ENCODE measurements at regions of chr3 and their contacts with region 1.

Region 1: GRCh38 chr3:150925751-150926201 is 20.5 kb upstream of the MINDY4B start:
- DNase-seq: peak in 1 of 2 experiments; percentile 77
- H3K4me3 ChIP-seq: no peak overlapping the region
- H3K27ac ChIP-seq: no peak overlapping the region
- H3K4me1 ChIP-seq: no peaks in the 10 kb centered on the region
- H3K27me3 ChIP-seq: peaks cover 4% of the 10 kb centered on the region; the same call in 1 of the 2 replicates
- CTCF ChIP-seq: peak; percentile 92

Region 2: DNA sequence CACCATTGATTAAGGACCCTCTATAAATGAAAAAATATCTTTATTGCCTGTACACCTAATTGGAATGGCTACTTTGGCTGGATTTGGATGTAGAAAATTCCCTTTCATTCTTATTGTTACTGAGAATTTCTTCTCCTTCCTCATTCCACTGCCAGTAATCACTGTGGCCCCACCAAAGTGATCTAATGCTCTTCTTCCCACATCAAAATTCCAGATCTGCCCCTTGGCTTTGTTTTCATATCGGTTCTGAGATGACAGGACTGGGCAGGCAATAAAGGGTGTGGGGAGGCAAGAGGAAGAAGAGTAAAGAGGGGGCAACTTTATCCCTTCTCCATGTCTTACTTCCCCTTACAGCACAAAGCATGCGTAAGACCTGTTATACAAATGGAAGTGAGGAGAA is 1135.5 kb before region 1 on chr3:
- CTCF ChIA-PET with region 1: no interaction called
- POLR2A ChIA-PET with region 1: no interaction called
- intact Hi-C with region 1: no loop called
- DNase-seq: peak; percentile 41 to 63
- H3K4me3 ChIP-seq: no peak overlapping the region
- H3K27ac ChIP-seq: 0 out of 2 replicates have a peak overlapping the region, but pooled peaks have one; percentile 25
- H3K4me1 ChIP-seq: peaks cover 15% of the 10 kb centered on the region
- H3K27me3 ChIP-seq: no peaks in the 10 kb centered on the region
- CTCF ChIP-seq: no peak

Region 3: DNA sequence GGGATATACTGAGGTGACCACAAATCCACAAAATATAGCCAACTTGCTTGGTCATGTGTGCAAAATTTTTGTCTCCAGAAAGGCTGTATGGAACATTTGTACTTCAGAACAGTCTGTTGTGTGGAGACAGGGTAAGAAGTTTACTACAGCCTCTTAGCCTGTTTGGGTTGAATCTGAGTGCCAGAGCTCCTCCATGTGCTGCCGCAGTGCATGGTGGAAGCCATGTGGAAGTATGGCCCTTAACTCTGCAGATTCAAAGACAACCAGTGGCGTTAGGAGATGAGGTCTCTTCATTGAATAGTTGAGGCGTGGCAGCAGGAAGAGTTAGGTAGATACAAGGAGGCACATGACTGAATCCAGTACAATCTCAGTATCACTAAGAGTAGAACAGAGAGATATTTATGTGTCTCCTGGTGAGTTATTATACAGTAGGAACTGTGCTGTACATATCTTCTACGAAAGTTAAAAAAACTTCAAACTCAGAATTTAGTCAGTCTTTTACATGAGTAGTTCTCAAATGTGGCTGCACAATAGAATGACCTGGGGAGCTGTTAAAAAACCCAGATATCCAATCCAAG is 369.8 kb before region 1 on chr3:
- CTCF ChIA-PET with region 1: no interaction called
- POLR2A ChIA-PET with region 1: interaction called, 33 read pairs
- intact Hi-C with region 1: no loop called
- DNase-seq: no peak
- H3K4me3 ChIP-seq: no peak overlapping the region
- H3K27ac ChIP-seq: no peak overlapping the region
- H3K4me1 ChIP-seq: no peaks in the 10 kb centered on the region
- H3K27me3 ChIP-seq: no peaks in the 10 kb centered on the region
- CTCF ChIP-seq: no peak

Region 4: DNA sequence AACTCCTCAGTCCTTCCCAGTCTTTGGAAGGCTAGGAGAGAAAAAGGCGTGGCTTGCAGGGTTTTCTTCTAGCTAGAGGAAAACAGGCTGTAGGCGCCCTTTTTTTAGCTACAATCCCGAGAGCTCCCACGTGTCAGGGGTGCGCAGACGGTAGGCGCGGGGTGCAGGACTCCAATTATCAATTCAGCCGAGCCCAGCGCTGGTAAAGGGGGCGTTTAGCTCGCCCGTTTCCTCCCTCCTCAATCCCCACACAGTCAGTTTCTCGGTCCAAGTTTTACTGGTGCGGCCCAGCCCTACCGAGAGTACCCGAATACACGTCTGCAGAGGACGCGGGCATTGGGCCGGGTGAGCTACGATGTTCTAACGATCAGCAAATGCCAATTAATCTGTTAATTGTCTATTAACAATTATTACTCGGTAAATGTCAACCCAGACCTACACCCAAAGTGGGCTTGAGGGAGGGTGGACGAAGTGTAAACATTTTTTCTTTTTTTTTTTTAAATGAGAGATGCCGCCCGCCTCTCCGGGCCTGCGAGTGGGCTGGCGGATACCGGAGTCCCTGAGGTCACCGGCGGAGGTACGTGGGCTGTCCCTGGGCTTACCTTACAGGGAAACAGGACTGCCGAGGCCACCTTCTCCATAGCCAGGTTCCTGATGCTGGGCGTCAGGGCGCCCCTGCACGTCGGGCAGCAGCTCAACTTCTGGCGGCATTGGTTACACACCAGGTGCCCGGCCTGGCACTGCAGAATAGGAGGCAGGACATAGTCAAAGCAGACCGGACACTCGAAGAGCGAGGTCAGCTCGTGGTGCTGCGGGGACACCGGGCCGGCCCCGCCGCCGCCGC is 163.7 kb before region 1 on chr3:
- CTCF ChIA-PET with region 1: no interaction called
- POLR2A ChIA-PET with region 1: no interaction called
- intact Hi-C with region 1: no loop called
- DNase-seq: peak; percentile 49 to 55
- H3K4me3 ChIP-seq: peak overlapping the region; percentile 69
- H3K27ac ChIP-seq: peak overlapping the region; percentile 84; the same call in 1 of the 2 replicates
- H3K4me1 ChIP-seq: peaks cover 55% of the 10 kb centered on the region
- H3K27me3 ChIP-seq: no peaks in the 10 kb centered on the region
- CTCF ChIP-seq: no peak

Region 5: GRCh38 chr3:150936693-150937092 is 10.9 kb after region 1 on chr3:
- CTCF ChIA-PET with region 1: no interaction called
- POLR2A ChIA-PET with region 1: no interaction called
- intact Hi-C with region 1: no loop called
- DNase-seq: no peak
- H3K4me3 ChIP-seq: no peak overlapping the region
- H3K27ac ChIP-seq: no peak overlapping the region
- H3K4me1 ChIP-seq: peaks cover 7% of the 10 kb centered on the region
- H3K27me3 ChIP-seq: no peaks in the 10 kb centered on the region
- CTCF ChIP-seq: no peak

Region 6: DNA sequence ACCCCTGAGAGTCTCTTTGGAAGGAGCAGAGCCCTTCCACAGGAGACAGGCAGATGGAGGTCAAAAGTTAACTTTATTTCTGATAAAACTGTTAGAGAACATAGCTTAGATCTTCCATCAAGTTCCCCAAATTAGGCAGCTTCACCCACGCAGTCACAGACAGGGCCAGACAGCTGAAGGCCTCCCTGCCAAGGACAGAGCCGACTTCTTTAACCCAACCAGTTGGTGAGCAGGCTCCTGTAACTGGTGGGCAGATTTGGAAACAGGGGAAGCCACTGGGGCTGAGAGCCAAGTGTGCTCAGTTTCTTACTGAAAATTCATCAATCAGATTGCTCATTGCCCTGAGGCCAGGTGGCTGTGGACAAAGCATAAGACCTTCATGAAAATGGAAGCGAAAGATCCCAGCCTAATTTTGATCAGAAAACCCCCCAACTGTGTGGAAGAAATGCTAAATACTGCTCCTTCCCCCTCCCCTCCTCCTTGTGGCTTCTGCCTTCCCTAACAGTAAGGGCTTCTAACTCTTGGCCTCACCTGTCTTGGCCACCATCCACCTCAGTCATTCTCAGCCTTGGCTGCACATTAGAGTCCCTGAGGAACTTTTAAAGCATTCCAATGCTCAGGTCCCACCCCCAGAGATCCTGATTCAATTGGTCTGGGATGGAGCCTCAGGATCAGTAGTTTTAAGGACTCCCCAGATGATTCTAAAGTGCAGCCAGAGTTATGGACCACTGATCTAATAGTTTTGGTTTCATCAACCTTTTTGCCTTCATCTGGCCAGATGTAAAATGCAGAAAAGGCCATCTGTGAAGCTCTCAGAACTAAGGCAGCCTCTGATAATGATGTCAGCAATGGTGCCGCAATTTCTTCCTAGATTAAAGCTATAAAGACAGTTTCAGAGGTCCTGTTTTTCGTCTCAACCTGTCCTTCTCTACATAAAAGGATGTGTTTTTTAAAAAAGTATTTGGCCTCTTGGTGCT is 35.2 kb after region 1 on chr3:
- CTCF ChIA-PET with region 1: no interaction called
- POLR2A ChIA-PET with region 1: no interaction called
- intact Hi-C with region 1: no loop called
- DNase-seq: no peak
- H3K4me3 ChIP-seq: no peak overlapping the region
- H3K27ac ChIP-seq: no peak overlapping the region
- H3K4me1 ChIP-seq: no peaks in the 10 kb centered on the region
- H3K27me3 ChIP-seq: no peaks in the 10 kb centered on the region
- CTCF ChIP-seq: no peak

Region 7: DNA sequence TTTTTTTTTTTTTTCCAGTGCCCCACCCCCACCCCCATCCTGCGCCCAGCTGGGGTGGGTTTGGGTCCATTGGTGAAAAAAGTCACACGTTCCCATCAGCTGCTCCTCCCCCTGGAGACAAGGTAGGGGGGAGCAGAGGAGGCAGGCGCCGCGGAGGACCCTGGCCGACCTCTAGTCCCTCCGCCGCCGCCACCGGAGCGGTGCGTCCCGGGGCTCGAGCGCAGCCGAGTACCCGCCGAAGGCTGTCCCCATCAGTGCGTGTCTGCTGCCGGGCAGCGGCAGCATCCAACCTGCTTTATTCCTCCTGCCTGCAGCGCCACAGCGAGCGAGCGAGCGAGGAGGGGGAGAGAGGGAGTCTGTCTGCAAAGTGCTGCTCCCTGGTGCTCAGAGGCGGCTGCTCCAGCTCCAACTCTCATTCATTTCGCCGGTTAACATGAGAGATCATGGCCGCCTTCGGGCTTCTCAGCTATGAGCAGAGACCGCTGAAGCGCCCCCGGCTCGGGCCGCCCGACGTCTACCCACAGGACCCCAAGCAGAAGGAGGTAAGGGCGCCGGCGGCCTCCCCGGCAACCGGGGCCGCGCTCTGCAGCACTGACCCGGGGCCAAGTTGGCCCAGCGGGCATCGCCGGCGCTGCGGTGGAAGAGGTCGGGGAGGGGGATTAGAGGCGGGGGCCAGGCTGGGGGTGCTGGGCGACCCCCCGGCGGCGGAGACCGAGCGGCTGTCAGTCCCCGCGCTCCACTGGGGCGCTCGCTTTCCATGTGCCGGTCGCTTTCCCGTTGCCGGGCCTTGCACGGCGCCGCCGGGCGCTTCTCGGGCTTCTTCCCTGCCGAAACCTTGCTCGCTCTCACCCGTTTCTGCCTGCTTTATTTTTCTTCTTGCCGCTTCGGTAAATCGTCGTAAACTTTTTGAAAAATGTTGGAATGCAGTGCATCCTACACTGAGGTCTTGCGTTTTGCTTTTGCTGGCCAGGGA is 161.0 kb after region 1 on chr3:
- CTCF ChIA-PET with region 1: no interaction called
- POLR2A ChIA-PET with region 1: no interaction called
- intact Hi-C with region 1: loop called (anchors 1 kb)
- DNase-seq: peak; percentile 62 to 73
- H3K4me3 ChIP-seq: peak overlapping the region; percentile 74
- H3K27ac ChIP-seq: no peak overlapping the region
- H3K4me1 ChIP-seq: no peaks in the 10 kb centered on the region
- H3K27me3 ChIP-seq: no peaks in the 10 kb centered on the region
- CTCF ChIP-seq: 0 out of 2 replicates have a peak, but pooled peaks have one; percentile 28

Region 8: DNA sequence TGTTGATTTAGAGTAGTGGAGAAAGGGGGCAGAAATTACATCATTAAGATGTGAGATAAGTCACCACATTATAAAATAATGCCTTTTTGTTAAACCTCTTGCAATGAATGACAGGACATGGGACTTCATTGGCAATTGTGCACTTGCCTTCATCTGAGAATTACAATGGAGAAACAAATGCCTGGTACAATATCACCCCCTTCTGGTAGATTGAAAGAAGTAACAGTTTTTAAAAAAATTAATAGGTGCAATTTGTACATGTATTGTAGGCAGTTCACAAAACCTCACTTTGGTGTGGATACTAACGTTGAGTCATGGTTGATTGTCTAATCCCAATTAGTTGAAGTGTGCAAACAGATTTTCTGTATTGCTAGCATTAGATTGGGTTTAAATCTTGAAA is 357.1 kb after region 1 on chr3:
- CTCF ChIA-PET with region 1: no interaction called
- POLR2A ChIA-PET with region 1: no interaction called
- intact Hi-C with region 1: loop called (anchors 1 kb)
- DNase-seq: peak in 1 of 2 experiments; percentile 54
- H3K4me3 ChIP-seq: no peak overlapping the region
- H3K27ac ChIP-seq: no peak overlapping the region
- H3K4me1 ChIP-seq: peaks cover 8% of the 10 kb centered on the region
- H3K27me3 ChIP-seq: no peaks in the 10 kb centered on the region
- CTCF ChIP-seq: peak; percentile 91